ENCODE measurements at regions of chr2 and their contacts with region 1.

Region 1: DNA sequence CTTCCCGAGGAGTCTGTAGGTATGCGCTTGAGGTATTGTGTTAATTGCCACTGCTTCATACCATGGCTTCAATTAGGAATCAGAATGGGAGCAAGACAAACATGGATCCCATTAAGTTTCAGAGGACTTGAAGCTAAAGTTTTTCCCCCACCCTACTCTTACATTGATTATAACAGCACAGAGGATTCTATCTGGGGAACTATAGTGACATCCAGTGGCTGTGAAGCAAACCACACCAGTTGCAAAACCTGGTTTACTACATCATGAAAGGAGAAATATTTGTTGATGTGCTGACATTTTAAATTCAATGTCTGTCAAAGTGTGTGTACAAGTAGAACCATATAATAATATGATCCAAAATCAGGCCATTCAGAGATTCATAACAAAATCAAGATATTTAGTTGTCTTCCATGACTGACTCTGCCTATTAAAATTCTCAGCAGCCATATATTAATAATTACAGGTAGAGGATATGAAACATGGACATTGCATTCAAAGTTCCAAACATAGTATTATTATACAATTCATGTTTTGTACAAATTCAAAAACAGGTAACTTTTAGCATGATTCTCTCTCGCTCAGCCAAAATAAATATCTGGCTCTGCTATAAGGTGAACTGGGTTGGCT is 82.9 kb downstream of the GRB14 start:
- DNase-seq: peak; percentile 27
- H3K4me3 ChIP-seq: no peak overlapping the region
- H3K27ac ChIP-seq: no peak overlapping the region
- H3K4me1 ChIP-seq: no peaks in the 10 kb centered on the region
- H3K27me3 ChIP-seq: no peaks in the 10 kb centered on the region
- CTCF ChIP-seq: peak; percentile 81 to 82

Region 2: GRCh38 chr2:163171786-163172531 is 1366.4 kb before region 1 on chr2:
- CTCF ChIA-PET with region 1: no interaction called
- dilution Hi-C with region 1: no loop called
- in situ Hi-C with region 1: no loop called
- intact Hi-C with region 1: loop called (anchors 5 kb)
- DNase-seq: peak; percentile 48
- H3K4me3 ChIP-seq: no peak overlapping the region
- H3K27ac ChIP-seq: no peak overlapping the region
- H3K4me1 ChIP-seq: no peaks in the 10 kb centered on the region
- H3K27me3 ChIP-seq: no peaks in the 10 kb centered on the region
- CTCF ChIP-seq: no peak

Region 3: GRCh38 chr2:164439885-164440284 is 98.5 kb before region 1 on chr2:
- CTCF ChIA-PET with region 1: no interaction called
- dilution Hi-C with region 1: no loop called
- in situ Hi-C with region 1: no loop called
- intact Hi-C with region 1: no loop called
- DNase-seq: no peak
- H3K4me3 ChIP-seq: no peak overlapping the region
- H3K27ac ChIP-seq: no peak overlapping the region
- H3K4me1 ChIP-seq: no peaks in the 10 kb centered on the region
- H3K27me3 ChIP-seq: peaks cover 7% of the 10 kb centered on the region
- CTCF ChIP-seq: no peak

Region 4: GRCh38 chr2:164504258-164504657 is 34.1 kb before region 1 on chr2:
- CTCF ChIA-PET with region 1: no interaction called
- dilution Hi-C with region 1: no loop called
- in situ Hi-C with region 1: no loop called
- intact Hi-C with region 1: loop called (anchors 1 kb)
- DNase-seq: peak; percentile 11
- H3K4me3 ChIP-seq: no peak overlapping the region
- H3K27ac ChIP-seq: no peak overlapping the region
- H3K4me1 ChIP-seq: no peaks in the 10 kb centered on the region
- H3K27me3 ChIP-seq: no peaks in the 10 kb centered on the region
- CTCF ChIP-seq: peak; percentile 60 to 78